ENCODE measurements at regions of chr11 and their contacts with region 1.

Region 1: DNA sequence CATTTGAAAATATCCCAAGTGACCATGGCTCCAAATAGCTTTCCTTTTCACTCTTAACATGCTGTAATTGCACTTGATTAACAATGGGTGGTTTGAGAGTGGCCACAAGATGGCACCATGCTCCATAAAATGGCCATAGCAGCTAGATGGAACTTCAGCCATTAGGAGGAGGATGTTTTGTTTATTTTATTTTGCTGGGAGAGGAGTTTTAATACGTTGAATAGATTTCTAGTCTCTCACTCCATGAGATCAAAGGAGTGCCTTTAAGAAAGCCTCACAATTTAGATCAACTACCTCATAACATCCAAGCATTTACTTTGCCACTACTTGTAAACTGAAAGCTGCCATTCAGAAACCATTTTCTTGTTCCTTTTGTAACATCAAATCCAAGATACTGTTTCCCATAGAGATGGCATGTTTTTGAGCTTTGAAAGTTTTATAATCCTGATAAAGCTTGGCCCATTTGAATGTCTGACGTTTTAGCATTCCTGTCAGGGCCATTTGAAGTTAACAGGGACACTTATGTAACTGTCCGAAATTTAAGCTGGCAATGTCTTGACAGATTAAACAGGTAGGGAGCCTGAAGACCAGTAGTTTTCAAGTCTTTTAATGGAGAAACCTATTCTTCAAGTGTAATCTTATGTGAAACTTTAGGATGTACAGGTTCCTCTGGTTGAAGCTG is 4.7 kb downstream of the FEN1 start:
- DNase-seq: peak; percentile 71
- H3K4me3 ChIP-seq: no peak overlapping the region
- H3K27ac ChIP-seq: no peak overlapping the region
- H3K4me1 ChIP-seq: peaks cover 20% of the 10 kb centered on the region
- CTCF ChIP-seq: peak; percentile 98

Region 2: DNA sequence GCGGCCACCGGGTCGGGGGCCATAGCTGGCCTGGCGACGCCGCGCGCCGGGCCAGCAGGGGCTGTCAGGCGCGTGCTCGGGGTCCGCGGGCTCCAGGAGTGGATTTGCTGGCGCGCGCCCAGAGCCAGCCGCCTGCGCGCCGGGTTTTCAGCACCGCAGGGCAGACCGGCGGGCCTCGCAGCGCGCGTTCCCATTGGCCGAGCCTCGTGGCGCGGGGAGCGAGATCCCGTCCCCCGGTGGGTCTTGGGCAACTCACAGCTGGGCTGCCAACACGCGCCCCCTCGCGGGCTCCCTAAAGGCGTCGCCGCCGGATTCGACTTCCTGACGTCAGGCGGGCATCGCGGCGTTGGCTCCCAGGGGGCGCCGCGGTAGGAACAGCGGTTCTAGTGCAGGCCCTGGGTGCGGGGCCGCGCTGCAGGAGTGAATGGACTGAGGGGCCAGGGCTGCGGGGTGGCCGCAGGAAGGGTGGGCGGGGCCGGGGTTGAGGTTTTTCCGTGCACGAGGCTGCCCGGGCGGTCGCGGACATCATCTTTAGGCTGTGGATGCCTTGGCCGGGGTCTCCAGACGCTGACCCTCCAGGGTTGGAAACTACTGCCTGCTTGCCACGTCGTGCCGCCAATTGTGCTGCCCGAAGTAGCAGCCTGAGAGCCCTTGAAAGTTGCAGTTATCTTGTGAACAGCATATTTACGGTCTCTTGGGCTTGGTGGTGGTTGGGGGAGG is 19.5 kb after region 1 on chr11 and contains the start of gene FADS1:
- CTCF ChIA-PET with region 1: interaction called, 3 read pairs
- POLR2A ChIA-PET with region 1: interaction called, 13 read pairs
- intact Hi-C with region 1: no loop called
- DNase-seq: no peak
- H3K4me3 ChIP-seq: no peak within 1 kb of the TSS
- H3K27ac ChIP-seq: no peak within 1 kb of the TSS
- H3K4me1 ChIP-seq: no peaks in the 10 kb centered on the region
- CTCF ChIP-seq: no peak; the same call in 1 of the 2 replicates
- total RNA-seq, gene FADS1: not detected in 2 replicates

Region 3: DNA sequence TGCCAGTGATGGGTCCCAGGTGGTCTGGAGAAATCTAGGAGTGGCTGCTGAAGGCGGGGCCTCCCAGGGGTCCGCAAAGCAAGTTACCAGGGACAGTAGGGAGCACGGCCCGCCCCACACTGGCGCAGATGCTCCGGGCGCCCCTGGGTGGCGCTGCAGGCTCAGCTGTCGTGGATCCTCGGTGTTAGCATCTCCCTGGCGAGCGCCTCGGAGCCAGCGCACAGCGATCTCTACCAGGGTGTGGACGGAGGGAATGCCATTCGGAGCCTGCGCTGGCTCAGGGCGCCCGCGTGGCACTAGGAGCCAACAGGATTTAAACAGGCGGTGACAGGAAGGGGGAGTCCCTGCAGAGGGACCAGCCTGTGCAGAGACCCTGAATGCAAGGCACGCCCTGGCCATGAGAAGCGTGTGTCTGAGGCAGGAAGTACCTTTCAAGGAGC is 73.8 kb after region 1 on chr11:
- CTCF ChIA-PET with region 1: no interaction called
- POLR2A ChIA-PET with region 1: no interaction called
- intact Hi-C with region 1: loop called (anchors 2 kb)
- DNase-seq: peak; percentile 81
- H3K4me3 ChIP-seq: no peak overlapping the region
- H3K27ac ChIP-seq: no peak overlapping the region
- H3K4me1 ChIP-seq: peaks cover 9% of the 10 kb centered on the region
- CTCF ChIP-seq: peak; percentile 95

Region 4: GRCh38 chr11:61947486-61948210 is 150.2 kb after region 1 on chr11:
- CTCF ChIA-PET with region 1: interaction called, 6 read pairs
- POLR2A ChIA-PET with region 1: no interaction called
- intact Hi-C with region 1: loop called (anchors 1 kb)
- DNase-seq: peak; percentile 78
- H3K4me3 ChIP-seq: no peak overlapping the region
- H3K27ac ChIP-seq: no peak overlapping the region
- H3K4me1 ChIP-seq: peaks cover 8% of the 10 kb centered on the region
- CTCF ChIP-seq: peak; percentile 94

Region 5: GRCh38 chr11:62081378-62082291 is 284.2 kb after region 1 on chr11:
- CTCF ChIA-PET with region 1: interaction called, 5 read pairs
- POLR2A ChIA-PET with region 1: no interaction called
- intact Hi-C with region 1: loop called (anchors 1 kb)
- DNase-seq: peak; percentile 58
- H3K4me3 ChIP-seq: no peak overlapping the region
- H3K27ac ChIP-seq: no peak overlapping the region
- H3K4me1 ChIP-seq: no peaks in the 10 kb centered on the region
- CTCF ChIP-seq: peak; percentile 99

Measured in OCI-LY7 (cell line).